ENCODE measurements at regions of chr7 and their contacts with region 1.

Region 1: GRCh38 chr7:4744391-4745264 is 30.8 kb upstream of the AP5Z1 start:
- DNase-seq: peak; percentile 84
- CTCF ChIP-seq: no peak

Region 2: GRCh38 chr7:4699841-4700240 is 44.8 kb before region 1 on chr7:
- CTCF ChIA-PET with region 1: no interaction called
- POLR2A ChIA-PET with region 1: no interaction called
- DNase-seq: no peak
- CTCF ChIP-seq: no peak

Region 3: GRCh38 chr7:4733936-4734528 is 10.6 kb before region 1 on chr7:
- CTCF ChIA-PET with region 1: interaction called, 22 read pairs
- POLR2A ChIA-PET with region 1: interaction called, 5 read pairs
- DNase-seq: no peak
- CTCF ChIP-seq: no peak